Heart right ventricle (tissue), 16 donors: ENCODE measurements at regions of chr2 and their contacts with region 1.

Region 1: DNA sequence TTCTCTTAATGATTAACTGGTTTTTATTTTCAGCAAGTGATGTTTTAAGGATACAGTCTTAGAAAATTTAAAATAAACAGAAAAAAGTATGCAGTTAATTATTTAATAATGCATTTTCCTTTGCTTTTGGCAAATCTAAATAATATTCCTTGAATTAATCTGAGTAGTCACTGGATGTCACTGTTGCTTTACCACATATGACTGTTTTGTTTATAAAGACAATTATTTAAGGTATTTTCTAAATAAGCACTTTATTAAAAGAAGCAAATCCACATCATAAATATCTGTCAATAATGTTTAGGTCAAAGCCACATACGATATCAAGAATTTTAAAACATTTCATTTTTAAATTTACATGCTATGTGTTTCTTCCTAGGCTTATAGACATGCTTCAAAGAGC is 40.6 kb upstream of the TFPI start:
- DNase-seq: no peak
- ATAC-seq: no peak
- H3K4me3 ChIP-seq: no peak overlapping the region
- H3K27ac ChIP-seq: no peak overlapping the region
- H3K4me1 ChIP-seq: no peaks in the 10 kb centered on the region
- H3K27me3 ChIP-seq: no peaks in the 10 kb centered on the region
- CTCF ChIP-seq: peak in 3 of 9 donors; percentile 5 to 39 (median 18)

Region 2: DNA sequence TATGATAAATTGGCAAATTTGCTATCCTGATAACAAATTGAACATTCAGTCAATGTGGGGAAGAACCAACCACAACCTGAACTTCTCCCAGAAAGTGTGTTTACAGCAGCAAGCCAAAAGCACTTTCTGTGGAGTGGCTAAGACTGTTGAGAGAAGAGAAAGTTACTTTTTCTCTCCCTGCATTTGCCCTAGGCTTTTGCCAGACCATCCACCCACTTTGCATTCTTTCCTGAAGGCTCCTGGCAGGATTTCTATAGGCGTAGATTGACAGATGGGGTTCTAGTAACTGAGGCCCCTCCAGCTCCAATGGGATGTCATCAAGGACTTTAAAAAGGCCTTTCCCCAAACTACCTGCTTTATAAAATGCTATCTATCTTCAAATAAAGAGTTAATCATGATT is 912.0 kb after region 1 on chr2:
- intact Hi-C with region 1: loop called in 1 of 10 experiments (anchors 10 kb)
- DNase-seq: no peak
- ATAC-seq: no peak
- H3K4me3 ChIP-seq: no peak overlapping the region
- H3K27ac ChIP-seq: no peak overlapping the region
- H3K4me1 ChIP-seq: no peaks in the 10 kb centered on the region
- H3K27me3 ChIP-seq: no peaks in the 10 kb centered on the region
- CTCF ChIP-seq: no peak